Aorta (tissue), 5 donors: ENCODE measurements at regions of chr2 and their contacts with region 1.

Region 1: DNA sequence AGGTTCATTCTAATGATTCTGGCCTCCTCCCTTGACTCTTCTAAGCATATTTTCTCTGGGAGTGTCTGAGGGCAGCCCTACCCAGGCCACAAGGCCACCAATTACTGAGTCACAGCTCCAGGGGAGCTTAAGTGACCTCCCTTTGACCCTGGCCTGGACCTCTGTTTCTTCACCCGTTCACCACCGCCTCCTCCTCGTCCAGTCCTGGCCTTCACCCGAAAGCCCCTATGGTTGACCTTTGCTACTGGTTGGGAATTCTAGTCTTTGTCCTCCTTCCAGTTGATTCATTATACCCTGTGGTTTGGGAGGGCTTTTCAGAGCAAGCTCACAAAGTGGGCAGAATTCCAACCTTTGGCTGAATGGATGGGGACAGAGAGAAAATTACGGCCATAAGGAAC is 72.6 kb downstream of the NRP2 start:
- DNase-seq: no peak
- ATAC-seq: no peak
- H3K4me3 ChIP-seq: no peak overlapping the region
- H3K27ac ChIP-seq: peak overlapping the region; percentile 73 to 86
- H3K4me1 ChIP-seq: peaks cover 18 to 20% of the 10 kb centered on the region in 2 donors
- H3K27me3 ChIP-seq: no peaks in the 10 kb centered on the region

Region 2: GRCh38 chr2:205685314-205686055 is 69.4 kb before region 1 on chr2:
- intact Hi-C with region 1: loop called in 1 of 2 experiments (anchors 2 kb)
- DNase-seq: peak; percentile 72 to 85
- ATAC-seq: peak; percentile 70
- H3K4me3 ChIP-seq: peak overlapping the region; percentile 67 to 68
- H3K27ac ChIP-seq: peak overlapping the region; percentile 24 to 72
- H3K4me1 ChIP-seq: peaks cover 0 to 2% of the 10 kb centered on the region in 2 donors
- H3K27me3 ChIP-seq: no peaks in the 10 kb centered on the region

Region 3: DNA sequence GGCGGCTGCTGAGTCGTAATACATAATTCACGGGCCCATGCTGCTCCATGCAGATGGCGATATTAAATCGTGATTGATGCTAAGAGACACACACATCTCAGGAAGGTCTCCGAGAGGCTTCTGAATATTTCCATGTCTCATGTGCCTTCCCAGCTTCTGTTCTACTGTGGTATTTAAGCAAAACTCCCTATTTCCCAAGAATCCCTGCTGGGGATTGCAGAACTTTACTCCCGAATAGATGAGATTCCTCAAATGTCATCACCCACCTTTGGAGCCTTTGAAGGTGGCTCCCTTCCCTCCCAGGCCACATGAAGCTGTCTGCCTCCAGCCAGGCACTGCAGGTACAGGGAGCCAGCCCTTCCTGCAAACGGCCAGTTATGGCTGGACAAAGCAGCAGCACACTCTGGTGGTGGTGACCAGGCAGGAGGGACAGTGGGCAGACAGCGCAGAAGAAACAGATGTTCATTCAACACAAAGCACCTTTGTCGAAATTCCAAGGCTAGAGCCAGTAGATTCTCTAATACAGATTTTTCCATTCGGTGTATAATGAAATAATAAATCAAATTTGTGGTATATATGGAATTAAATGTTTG is 58.5 kb before region 1 on chr2:
- intact Hi-C with region 1: no loop called
- DNase-seq: no peak
- ATAC-seq: no peak
- H3K4me3 ChIP-seq: no peak overlapping the region
- H3K27ac ChIP-seq: no peak overlapping the region
- H3K4me1 ChIP-seq: peaks cover 0 to 2% of the 10 kb centered on the region in 2 donors
- H3K27me3 ChIP-seq: no peaks in the 10 kb centered on the region

Region 4: GRCh38 chr2:205706769-205707381 is 48.0 kb before region 1 on chr2:
- intact Hi-C with region 1: loop called in 1 of 2 experiments (anchors 5 kb)
- DNase-seq: peak in 1 of 2 donors; percentile 85
- ATAC-seq: peak; percentile 65
- H3K4me3 ChIP-seq: no peak overlapping the region
- H3K27ac ChIP-seq: peak overlapping the region; percentile 28 to 96
- H3K4me1 ChIP-seq: peaks cover 0 to 10% of the 10 kb centered on the region in 2 donors
- H3K27me3 ChIP-seq: no peaks in the 10 kb centered on the region

Region 5: DNA sequence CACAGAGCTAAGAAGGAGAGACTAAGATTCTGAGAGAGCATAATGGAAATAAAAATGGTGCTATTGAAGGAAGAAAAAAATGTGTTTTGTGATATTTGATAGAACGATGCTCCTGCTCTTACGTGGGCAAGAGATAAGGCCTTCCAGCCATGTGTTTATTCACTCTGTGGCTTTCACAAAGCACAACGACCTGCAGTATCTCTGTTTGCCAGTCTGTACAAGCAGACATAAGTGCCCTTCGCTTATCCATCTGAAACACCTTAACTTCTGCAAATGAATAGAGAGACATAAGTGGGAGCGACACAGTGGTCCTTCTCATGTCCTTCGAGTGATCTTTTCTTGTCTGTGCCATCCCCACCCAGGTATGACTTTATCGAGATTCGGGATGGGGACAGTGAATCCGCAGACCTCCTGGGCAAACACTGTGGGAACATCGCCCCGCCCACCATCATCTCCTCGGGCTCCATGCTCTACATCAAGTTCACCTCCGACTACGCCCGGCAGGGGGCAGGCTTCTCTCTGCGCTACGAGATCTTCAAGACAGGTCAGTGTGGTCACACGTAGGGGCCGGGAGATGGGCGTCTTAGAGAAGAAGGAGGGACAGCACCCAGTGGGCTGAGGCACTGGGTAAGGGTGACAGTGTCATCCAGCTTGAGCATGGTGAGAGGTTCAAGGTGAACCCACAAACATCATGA is 38.9 kb before region 1 on chr2:
- intact Hi-C with region 1: loop called in 1 of 2 experiments (anchors 5 kb)
- DNase-seq: no peak
- ATAC-seq: no peak
- H3K4me3 ChIP-seq: no peak overlapping the region
- H3K27ac ChIP-seq: no peak overlapping the region
- H3K4me1 ChIP-seq: no peaks in the 10 kb centered on the region
- H3K27me3 ChIP-seq: no peaks in the 10 kb centered on the region